ENCODE measurements at regions of chr22 and their contacts with region 1.

Region 1: GRCh38 chr22:50058906-50059880 is 1.1 kb upstream of the TTLL8 start:
- DNase-seq: peak; percentile 28
- H3K4me3 ChIP-seq: no peak overlapping the region
- H3K27ac ChIP-seq: no peak overlapping the region
- H3K4me1 ChIP-seq: peaks cover 64% of the 10 kb centered on the region
- CTCF ChIP-seq: peak; percentile 33; the same call in 1 of the 2 replicates

Region 2: DNA sequence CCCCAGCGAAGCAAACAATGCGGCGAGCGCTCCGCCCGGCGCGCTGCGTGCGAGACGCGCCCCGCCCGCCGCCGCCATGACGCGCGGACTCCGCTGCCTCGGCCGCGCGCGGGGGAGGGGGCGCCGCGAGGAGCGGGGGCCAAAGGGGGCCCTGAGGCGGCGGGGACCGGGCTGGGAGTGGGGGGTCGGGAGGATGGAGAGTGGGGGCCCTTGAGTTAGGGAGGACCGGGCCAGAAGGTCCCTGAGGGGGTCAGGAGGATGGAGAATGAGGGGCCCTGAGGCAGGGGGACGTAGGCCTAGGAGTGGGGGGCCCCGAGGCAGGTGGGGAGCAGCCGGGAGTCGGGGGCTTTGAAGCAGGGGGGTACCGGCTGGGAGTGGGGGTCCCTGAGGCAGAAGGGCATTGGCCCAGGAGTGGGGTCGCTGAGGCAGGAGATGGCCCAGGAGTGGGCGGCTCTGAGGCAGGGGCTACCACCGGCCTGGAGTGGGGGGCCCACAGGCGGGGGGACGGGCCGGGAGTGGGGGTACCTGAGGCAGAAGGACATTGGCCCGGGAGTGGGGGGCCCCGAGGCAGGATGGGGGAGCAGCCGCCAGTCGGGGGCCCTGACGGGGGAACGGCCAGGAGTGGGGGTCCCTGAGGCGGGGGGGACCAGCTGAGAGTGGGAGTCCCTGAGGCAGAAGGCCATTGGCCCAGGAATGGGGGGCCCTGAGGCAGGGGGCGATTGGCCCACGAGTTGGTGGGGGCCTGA is 231.2 kb before region 1 on chr22 and contains the start of gene BRD1:
- CTCF ChIA-PET with region 1: no interaction called
- POLR2A ChIA-PET with region 1: no interaction called
- intact Hi-C with region 1: no loop called
- DNase-seq: peak; percentile 83
- H3K4me3 ChIP-seq: peak within 1 kb of the TSS; percentile 78
- H3K27ac ChIP-seq: peak within 1 kb of the TSS; percentile 61
- H3K4me1 ChIP-seq: peaks cover 38% of the 10 kb centered on the region
- CTCF ChIP-seq: no peak
- total RNA-seq, gene BRD1: 37.3 and 38.1 TPM in 2 replicates

Region 3: GRCh38 chr22:50112151-50113118 is 53.2 kb after region 1 on chr22:
- CTCF ChIA-PET with region 1: interaction called, 13 read pairs
- POLR2A ChIA-PET with region 1: interaction called, 3 read pairs
- intact Hi-C with region 1: no loop called
- DNase-seq: no peak
- H3K4me3 ChIP-seq: no peak overlapping the region
- H3K27ac ChIP-seq: no peak overlapping the region
- H3K4me1 ChIP-seq: peaks cover 19% of the 10 kb centered on the region
- CTCF ChIP-seq: 0 out of 2 replicates have a peak, but pooled peaks have one; percentile 27